ENCODE measurements at regions of chr2 and their contacts with region 1.

Region 1: DNA sequence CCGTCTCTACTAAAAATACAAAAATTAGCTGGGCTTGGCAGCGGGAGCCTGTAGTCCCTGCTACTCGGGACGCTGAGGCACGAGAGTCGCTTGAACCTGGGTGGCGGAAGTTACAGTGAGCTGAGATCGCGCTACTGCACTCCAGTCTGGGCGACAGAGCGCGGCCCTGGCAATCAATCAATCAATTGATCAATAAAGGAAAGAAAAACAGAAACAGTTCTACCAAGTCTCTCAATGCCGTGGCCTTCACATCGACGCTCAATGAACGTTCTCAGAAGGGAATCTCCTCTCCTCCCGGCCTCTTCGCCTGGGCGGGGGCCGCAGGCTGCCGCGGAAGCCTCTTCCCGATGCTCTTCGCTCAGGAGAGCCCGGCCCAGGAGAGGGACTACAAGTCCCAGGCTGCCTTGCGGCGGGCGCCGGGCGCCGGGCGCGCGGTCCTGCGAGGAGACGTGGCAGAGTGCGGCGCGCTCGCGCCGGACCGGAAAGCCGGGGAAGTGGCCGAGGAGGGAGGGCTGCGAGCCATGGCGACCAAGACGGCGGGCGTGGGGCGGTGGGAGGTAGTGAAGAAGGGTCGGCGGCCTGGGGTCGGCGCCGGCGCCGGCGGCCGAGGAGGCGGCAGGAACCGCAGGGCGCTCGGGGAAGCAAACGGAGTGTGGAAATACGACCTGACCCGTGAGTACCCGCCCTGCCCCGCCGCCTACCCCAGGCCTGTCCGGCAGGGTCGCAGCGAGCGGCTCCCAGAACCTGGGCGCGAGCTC is at the start of gene TMEM214:
- DNase-seq: peak; percentile 81
- ATAC-seq: peak; percentile 98
- H3K4me3 ChIP-seq: peak within 1 kb of the TSS; percentile 64 to 93 (median 78)
- H3K4me3 Mint-ChIP-seq: peak within 1 kb of the TSS; percentile 95
- H3K27ac ChIP-seq: peak within 1 kb of the TSS; percentile 72 to 78
- H3K27ac Mint-ChIP-seq: peak within 1 kb of the TSS; percentile 93
- H3K4me1 ChIP-seq: peaks cover 16 to 23% of the 10 kb centered on the region in 2 donors
- H3K4me1 Mint-ChIP-seq: peaks cover 29% of the 10 kb centered on the region
- H3K27me3 ChIP-seq: no peaks in the 10 kb centered on the region
- H3K27me3 Mint-ChIP-seq: no peaks in the 10 kb centered on the region
- CTCF ChIP-seq: no peak
- total RNA-seq, gene TMEM214: 91.1 and 97.0 TPM in 2 replicates

Region 2: DNA sequence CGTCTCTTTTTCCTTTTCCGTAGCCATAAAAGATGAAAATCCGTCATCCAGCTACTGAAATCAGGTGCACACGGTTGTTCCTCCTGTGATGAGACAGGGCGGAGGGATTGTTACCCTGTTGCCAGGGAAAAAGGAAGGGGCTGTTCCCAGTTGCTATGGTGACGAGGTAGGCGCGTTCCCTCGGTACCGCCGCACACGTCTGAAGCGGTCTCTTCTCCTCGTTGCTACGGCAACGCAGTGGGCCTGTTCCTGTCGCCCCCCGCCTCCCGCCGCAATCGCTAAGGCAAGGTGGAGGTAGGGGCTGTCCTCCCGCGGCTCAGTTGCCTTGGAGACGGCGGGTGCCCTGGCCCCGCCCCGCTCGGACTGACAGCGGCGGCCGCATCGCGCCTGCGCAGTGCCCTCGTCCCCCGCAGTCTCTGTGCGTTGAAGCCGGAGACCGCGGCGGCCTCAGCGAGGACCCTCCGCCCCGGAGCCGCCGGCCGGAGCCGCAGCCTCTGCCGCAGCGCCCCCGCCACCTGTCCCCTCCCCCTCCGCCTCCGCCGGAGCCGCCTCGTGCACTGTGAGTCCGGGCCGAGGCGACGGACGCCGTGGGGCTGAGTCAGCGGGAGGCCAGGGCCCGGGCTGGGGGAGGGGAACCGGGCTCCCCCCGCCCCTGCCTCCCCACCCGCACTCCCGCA is 62.3 kb before region 1 on chr2 and contains the start of gene MAPRE3:
- CTCF ChIA-PET with region 1: interaction called, 3 read pairs
- POLR2A ChIA-PET with region 1: no interaction called
- intact Hi-C with region 1: loop called (anchors 1 kb)
- DNase-seq: peak; percentile 92
- ATAC-seq: peak; percentile 94
- H3K4me3 ChIP-seq: peak within 1 kb of the TSS; percentile 59 to 70 (median 62)
- H3K4me3 Mint-ChIP-seq: peak within 1 kb of the TSS; percentile 91
- H3K27ac ChIP-seq: peak within 1 kb of the TSS in 1 of 2 donors; percentile 47
- H3K27ac Mint-ChIP-seq: peak within 1 kb of the TSS; percentile 59
- H3K4me1 ChIP-seq: peaks cover 11 to 12% of the 10 kb centered on the region in 2 donors
- H3K4me1 Mint-ChIP-seq: peaks cover 19% of the 10 kb centered on the region
- H3K27me3 ChIP-seq: peaks cover 2 to 11% (median 5%) of the 10 kb centered on the region in 4 experiments
- H3K27me3 Mint-ChIP-seq: peaks cover 26% of the 10 kb centered on the region
- CTCF ChIP-seq: no peak
- total RNA-seq, gene MAPRE3: 5.4 and 7.1 TPM in 2 replicates

Region 3: DNA sequence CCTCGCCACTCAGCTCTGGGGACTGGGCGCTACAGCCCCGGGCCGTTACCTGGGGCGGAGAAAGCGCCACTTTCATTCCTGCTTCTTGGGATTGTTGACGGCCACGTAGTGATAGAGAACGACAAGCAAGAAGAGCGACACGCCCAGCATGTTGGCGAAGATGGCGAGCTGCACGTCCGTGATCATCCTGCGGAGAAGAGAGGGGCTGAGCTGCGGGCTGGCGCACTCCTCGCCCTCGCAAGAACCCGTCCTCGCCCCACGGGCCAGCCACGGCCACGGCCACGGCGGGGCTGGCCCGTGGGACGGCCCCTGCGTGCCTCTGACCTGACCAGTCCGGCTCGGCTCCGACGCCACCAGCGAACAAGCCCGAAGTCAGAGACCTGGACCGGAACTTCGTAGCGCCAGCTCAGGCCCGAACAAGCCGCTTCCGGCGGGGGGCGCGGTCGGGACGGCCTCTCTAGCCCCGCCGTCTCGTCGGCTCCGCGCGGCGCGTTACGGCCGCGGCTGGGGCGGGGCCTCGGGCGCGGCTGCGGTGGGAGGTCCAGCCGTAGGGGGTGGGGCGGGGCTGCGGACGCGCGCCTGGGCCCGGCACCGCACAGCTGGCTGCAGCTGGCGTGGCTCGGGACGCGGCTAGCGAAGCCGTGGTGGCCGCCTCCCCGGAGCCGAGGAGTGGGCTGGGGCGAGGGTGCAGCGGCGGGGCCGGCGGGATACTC is 38.8 kb after region 1 on chr2 and contains the start of gene OST4:
- CTCF ChIA-PET with region 1: interaction called, 3 read pairs
- POLR2A ChIA-PET with region 1: no interaction called
- intact Hi-C with region 1: loop called (anchors 1 kb)
- DNase-seq: peak; percentile 93
- ATAC-seq: peak; percentile 95
- H3K4me3 ChIP-seq: peak within 1 kb of the TSS; percentile 79 to 91 (median 88)
- H3K4me3 Mint-ChIP-seq: peak within 1 kb of the TSS; percentile 99
- H3K27ac ChIP-seq: peak within 1 kb of the TSS; percentile 64 to 87
- H3K27ac Mint-ChIP-seq: peak within 1 kb of the TSS; percentile 95
- H3K4me1 ChIP-seq: peaks cover 35 to 43% of the 10 kb centered on the region in 2 donors
- H3K4me1 Mint-ChIP-seq: peaks cover 62% of the 10 kb centered on the region
- H3K27me3 ChIP-seq: no peaks in the 10 kb centered on the region
- H3K27me3 Mint-ChIP-seq: no peaks in the 10 kb centered on the region
- CTCF ChIP-seq: no peak
- total RNA-seq, gene OST4: 195 and 199 TPM in 2 replicates

Region 4: DNA sequence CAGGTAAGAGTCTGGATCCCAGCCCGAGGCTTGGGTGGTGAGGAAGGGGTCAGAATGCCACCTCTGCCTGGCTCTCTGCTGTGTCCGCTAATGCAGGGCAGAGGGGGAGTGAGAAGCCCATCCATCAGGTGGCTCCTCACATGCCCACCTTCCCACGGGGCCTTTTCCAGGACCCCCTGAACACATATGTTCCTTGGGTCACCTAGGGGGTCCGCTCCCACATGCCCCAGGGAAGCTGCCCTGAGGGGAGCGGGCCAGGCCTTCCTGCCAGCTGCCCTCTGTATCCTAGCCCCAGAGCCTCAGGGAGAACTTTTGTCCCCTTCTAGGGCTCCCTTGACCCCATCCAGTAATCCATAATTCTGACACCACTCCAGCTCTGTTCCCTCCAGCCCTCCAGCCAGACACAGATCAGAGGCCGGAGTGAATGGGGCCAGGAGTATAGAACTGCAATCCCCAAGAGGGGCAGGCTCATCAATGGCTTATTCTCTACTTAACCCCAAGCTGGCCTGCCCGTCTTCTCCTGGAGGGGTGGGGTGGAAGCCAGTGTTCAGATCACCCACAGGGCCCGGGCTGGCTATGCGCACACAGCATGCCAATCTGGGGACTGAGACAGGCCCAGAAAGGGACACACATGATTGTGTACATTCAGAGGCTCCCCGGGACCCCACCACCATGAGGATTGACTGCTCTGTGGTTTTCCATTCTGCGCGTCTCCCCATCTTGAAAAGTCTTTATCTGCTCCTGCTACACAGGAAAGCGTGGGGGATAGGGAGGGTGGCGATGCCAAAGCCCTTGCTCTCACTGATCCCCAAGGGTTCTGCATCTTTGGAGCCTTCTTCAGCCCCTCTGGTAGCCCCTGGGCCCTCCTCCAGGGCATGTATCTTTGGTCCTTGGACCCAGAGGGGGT is 46.8 kb after region 1 on chr2:
- CTCF ChIA-PET with region 1: no interaction called
- POLR2A ChIA-PET with region 1: no interaction called
- intact Hi-C with region 1: loop called (anchors 1 kb)
- DNase-seq: no peak
- ATAC-seq: no peak
- H3K4me3 ChIP-seq: no peak overlapping the region
- H3K4me3 Mint-ChIP-seq: no peak overlapping the region
- H3K27ac ChIP-seq: no peak overlapping the region
- H3K27ac Mint-ChIP-seq: no peak overlapping the region
- H3K4me1 ChIP-seq: peaks cover 27 to 37% of the 10 kb centered on the region in 2 donors
- H3K4me1 Mint-ChIP-seq: peaks cover 37% of the 10 kb centered on the region
- H3K27me3 ChIP-seq: peaks cover 0 to 11% (median 4%) of the 10 kb centered on the region in 4 experiments
- H3K27me3 Mint-ChIP-seq: no peaks in the 10 kb centered on the region
- CTCF ChIP-seq: no peak

Region 5: GRCh38 chr2:27291865-27292264 is 259.2 kb after region 1 on chr2:
- CTCF ChIA-PET with region 1: no interaction called
- POLR2A ChIA-PET with region 1: no interaction called
- intact Hi-C with region 1: no loop called
- DNase-seq: no peak
- ATAC-seq: no peak
- H3K4me3 ChIP-seq: no peak overlapping the region
- H3K4me3 Mint-ChIP-seq: no peak overlapping the region
- H3K27ac ChIP-seq: no peak overlapping the region
- H3K27ac Mint-ChIP-seq: no peak overlapping the region
- H3K4me1 ChIP-seq: peaks cover 5 to 10% of the 10 kb centered on the region in 2 donors
- H3K4me1 Mint-ChIP-seq: peaks cover 2% of the 10 kb centered on the region
- H3K27me3 ChIP-seq: peaks cover 0 to 6% (median 0%) of the 10 kb centered on the region in 4 experiments
- H3K27me3 Mint-ChIP-seq: peaks cover 20% of the 10 kb centered on the region
- CTCF ChIP-seq: no peak